Spleen (tissue), 13 donors: ENCODE measurements at regions of chr5 and their contacts with region 1.

Region 1: GRCh38 chr5:142753116-142753631 is 17.0 kb upstream of the ARHGAP26 start:
- DNase-seq: no peak
- H3K4me3 ChIP-seq: no peak overlapping the region
- H3K27ac ChIP-seq: peak overlapping the region in 3 of 8 donors; percentile 37 to 43 (median 43)
- H3K4me1 ChIP-seq: peaks cover 0 to 16% (median 2%) of the 10 kb centered on the region in 6 donors
- H3K27me3 ChIP-seq: no peaks in the 10 kb centered on the region
- CTCF ChIP-seq: no peak
- POLR2A ChIP-seq: no peak

Region 2: DNA sequence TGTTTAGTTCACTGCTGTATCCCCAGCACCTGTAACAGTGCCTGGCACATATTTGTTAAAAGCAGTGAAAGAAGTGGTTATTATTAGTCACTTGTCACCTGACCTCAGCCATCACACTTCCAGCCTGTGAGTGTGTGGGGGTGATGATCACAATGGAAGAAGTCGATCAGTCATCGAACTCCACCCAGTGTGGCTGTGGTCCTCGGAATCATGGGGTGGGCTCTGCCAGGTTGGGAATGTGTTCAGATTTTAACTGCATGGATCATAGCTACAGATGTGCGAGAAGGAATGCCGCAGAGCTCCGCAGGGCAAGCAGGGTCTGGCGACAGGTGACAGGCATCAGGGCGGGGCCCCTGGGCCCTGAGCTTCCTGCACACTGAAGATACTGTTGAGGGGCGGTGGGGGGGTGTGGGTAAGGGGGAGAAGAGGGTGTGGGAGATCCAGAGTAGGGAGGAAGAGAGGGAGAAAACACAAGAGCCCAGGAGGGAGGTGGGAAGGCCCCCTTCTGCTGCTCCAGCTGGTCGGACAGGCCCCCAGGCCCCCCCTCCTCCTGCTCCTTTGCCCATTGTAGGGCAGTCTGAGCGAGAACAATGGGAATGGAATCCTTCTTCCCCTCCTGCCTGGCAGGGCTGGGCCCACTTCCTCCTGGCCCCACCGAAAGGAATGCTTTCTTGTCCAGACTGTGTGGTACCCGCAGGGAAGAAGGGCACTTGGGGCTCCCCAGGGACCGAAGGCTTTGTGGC is 517.9 kb before region 1 on chr5:
- intact Hi-C with region 1: no loop called
- DNase-seq: no peak
- H3K4me3 ChIP-seq: no peak overlapping the region
- H3K27ac ChIP-seq: no peak overlapping the region
- H3K4me1 ChIP-seq: no peaks in the 10 kb centered on the region
- H3K27me3 ChIP-seq: peaks cover 0 to 27% (median 0%) of the 10 kb centered on the region in 7 donors
- CTCF ChIP-seq: no peak
- POLR2A ChIP-seq: no peak

Region 3: GRCh38 chr5:142869883-142870282 is 116.7 kb after region 1 on chr5:
- intact Hi-C with region 1: loop called (anchors 10 kb)
- DNase-seq: no peak
- H3K4me3 ChIP-seq: no peak overlapping the region
- H3K27ac ChIP-seq: no peak overlapping the region
- H3K4me1 ChIP-seq: peaks cover 0 to 80% (median 34%) of the 10 kb centered on the region in 6 donors
- H3K27me3 ChIP-seq: no peaks in the 10 kb centered on the region
- CTCF ChIP-seq: no peak
- POLR2A ChIP-seq: no peak